ENCODE measurements at regions of chr12 and their contacts with region 1.

Region 1: DNA sequence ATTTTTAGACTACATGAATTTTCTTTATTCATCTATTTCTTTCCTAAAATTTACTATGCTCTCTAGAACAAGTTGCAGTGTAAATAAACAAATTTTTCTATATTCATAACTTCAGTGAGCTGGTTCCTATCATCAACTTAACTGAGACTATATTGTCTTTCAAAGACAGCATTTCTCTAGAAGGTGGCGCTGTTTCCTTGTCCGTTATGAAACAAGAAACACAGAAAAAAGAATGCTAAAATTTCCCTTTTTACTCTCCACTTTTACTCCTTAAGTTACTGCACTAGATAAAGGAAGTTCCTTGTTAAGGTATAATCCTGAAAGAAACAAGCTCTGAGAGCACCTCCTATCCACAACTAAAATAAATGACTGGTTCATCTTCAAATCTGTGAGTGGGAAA is 8.2 kb upstream of the CLEC2A start:
- DNase-seq: peak in 2 of 9 experiments; percentile 33 to 55
- ATAC-seq: no peak
- H3K4me3 ChIP-seq: no peak overlapping the region
- H3K4me3 Mint-ChIP-seq: no peak overlapping the region
- H3K27ac ChIP-seq: no peak overlapping the region
- H3K27ac Mint-ChIP-seq: no peak overlapping the region
- H3K4me1 ChIP-seq: no peaks in the 10 kb centered on the region
- H3K4me1 Mint-ChIP-seq: peaks cover 10% of the 10 kb centered on the region
- H3K27me3 ChIP-seq: no peaks in the 10 kb centered on the region
- H3K27me3 Mint-ChIP-seq: no peaks in the 10 kb centered on the region
- CTCF ChIP-seq: peak; percentile 41

Region 2: DNA sequence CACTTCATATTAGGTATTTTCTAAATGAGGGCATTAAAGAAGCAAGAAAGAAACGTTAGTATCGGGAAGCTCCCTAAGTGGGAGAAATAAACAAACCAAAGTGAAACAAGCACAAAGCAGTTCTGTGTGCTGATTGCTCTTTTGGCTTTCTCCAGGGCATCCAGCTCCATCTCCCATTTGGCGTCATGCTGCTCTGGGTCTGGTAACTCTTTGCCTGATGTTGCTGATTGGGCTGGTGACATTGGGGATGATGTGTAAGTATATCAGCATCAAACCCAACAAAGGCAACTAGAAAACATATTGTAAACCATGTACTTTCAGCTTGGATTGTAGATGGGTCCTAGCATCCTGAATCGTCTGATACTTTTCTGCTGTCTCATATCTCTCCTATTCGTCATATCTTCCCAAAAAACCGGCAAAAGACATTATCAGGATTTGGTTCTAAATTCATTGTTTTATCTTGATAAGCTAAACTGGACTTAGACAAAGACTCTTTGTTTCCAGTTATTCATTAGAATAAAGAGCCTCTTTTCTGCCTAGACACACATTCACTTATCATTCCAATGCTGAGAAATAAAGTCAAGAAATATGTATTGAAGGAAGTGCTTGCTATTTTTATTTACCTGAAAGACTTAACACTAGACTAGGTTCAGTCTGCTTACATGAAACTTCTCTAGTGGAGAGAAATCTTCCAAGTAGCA is 72.4 kb after region 1 on chr12:
- CTCF ChIA-PET with region 1: interaction called, 13 read pairs
- POLR2A ChIA-PET with region 1: no interaction called
- intact Hi-C with region 1: no loop called
- DNase-seq: no peak
- ATAC-seq: no peak
- H3K4me3 ChIP-seq: no peak overlapping the region
- H3K4me3 Mint-ChIP-seq: no peak overlapping the region
- H3K27ac ChIP-seq: no peak overlapping the region
- H3K27ac Mint-ChIP-seq: no peak overlapping the region
- H3K4me1 ChIP-seq: no peaks in the 10 kb centered on the region
- H3K4me1 Mint-ChIP-seq: no peaks in the 10 kb centered on the region
- H3K27me3 ChIP-seq: peaks cover 0 to under 1% of the 10 kb centered on the region in 2 experiments
- H3K27me3 Mint-ChIP-seq: peaks cover 10% of the 10 kb centered on the region
- CTCF ChIP-seq: no peak

Region 3: DNA sequence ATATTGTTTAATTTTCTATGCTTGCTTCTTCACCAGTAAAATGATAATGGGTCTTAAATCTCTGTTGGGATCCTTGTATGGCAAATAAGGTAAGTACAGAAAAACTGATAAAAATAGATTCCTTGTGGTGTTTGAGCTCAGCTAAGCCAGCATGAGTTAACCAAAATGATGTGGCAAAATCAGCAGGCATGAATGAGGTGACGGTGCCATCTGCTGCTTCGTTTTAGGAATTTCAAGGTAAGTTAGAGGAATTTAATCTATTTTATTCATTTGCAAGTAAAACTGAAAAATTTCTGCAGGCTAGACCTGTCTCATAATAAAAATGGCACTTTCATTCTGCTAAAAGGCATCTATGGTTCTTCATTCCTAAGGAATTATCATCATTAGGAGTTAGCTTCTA is 199.6 kb after region 1 on chr12:
- CTCF ChIA-PET with region 1: interaction called, 6 read pairs
- POLR2A ChIA-PET with region 1: no interaction called
- intact Hi-C with region 1: loop called (anchors 1 to 2 kb)
- DNase-seq: peak in 6 of 9 experiments; percentile 9 to 69 (median 46)
- ATAC-seq: peak; percentile 51
- H3K4me3 ChIP-seq: no peak overlapping the region
- H3K4me3 Mint-ChIP-seq: no peak overlapping the region
- H3K27ac ChIP-seq: no peak overlapping the region
- H3K27ac Mint-ChIP-seq: no peak overlapping the region
- H3K4me1 ChIP-seq: no peaks in the 10 kb centered on the region
- H3K4me1 Mint-ChIP-seq: peaks cover 2% of the 10 kb centered on the region
- H3K27me3 ChIP-seq: peaks cover 0 to 4% of the 10 kb centered on the region in 2 experiments
- H3K27me3 Mint-ChIP-seq: peaks cover 6% of the 10 kb centered on the region
- CTCF ChIP-seq: peak; percentile 68

Region 4: GRCh38 chr12:10190558-10191388 is 250.4 kb after region 1 on chr12:
- CTCF ChIA-PET with region 1: interaction called, 4 read pairs
- POLR2A ChIA-PET with region 1: no interaction called
- intact Hi-C with region 1: loop called (anchors 2 to 5 kb)
- DNase-seq: peak in 8 of 9 experiments; percentile 30 to 77 (median 58)
- ATAC-seq: peak; percentile 99
- H3K4me3 ChIP-seq: no peak overlapping the region
- H3K4me3 Mint-ChIP-seq: no peak overlapping the region
- H3K27ac ChIP-seq: no peak overlapping the region
- H3K27ac Mint-ChIP-seq: no peak overlapping the region
- H3K4me1 ChIP-seq: no peaks in the 10 kb centered on the region
- H3K4me1 Mint-ChIP-seq: peaks cover 6% of the 10 kb centered on the region
- H3K27me3 ChIP-seq: peaks cover 0 to 5% of the 10 kb centered on the region in 2 experiments
- H3K27me3 Mint-ChIP-seq: peaks cover 12% of the 10 kb centered on the region
- CTCF ChIP-seq: peak; percentile 83